H1 (cell line): ENCODE measurements at regions of chr22 and their contacts with region 1.

Region 1: DNA sequence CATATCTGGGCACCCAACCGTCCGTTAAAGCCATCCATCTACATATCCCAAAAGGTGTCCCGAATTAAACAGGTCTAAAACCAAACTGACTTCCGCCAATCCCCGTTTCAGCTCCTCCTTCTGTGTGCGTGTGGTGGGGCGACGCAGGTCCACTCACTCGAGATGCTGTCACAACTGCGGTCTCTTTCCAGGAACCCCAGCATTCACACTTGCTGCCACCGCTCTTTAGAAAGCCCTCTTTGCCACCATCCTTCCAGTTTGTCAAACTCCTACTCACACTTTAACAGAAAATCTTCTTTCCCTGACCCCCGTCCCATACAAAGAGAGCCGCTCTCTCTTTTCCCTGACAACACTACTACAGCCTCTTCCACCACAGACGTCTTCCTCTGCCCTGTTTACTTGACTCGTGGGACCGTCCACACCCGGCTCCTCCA is 467 bp downstream of the ESS2 start:
- DNase-seq: no peak
- H3K4me3 ChIP-seq: peak overlapping the region; percentile 47 to 94 (median 92)
- H3K27ac ChIP-seq: 0 out of 2 replicates have a peak overlapping the region, but pooled peaks have one; percentile 59
- H3K4me1 ChIP-seq: peaks cover 0 to 12% (median 5%) of the 10 kb centered on the region in 4 experiments; a peak in 5 of 7 replicates
- H3K27me3 ChIP-seq: peaks cover 16 to 29% (median 22%) of the 10 kb centered on the region in 4 experiments
- CTCF ChIP-seq: no peak
- EP300 ChIP-seq: no peak
- POLR2A ChIP-seq: no peak
- RAD21 ChIP-seq: no peak

Region 2: GRCh38 chr22:19130959-19131684 is 12.9 kb before region 1 on chr22 and contains the start of gene TSSK2:
- CTCF ChIA-PET with region 1: interaction called, 7 read pairs
- POLR2A ChIA-PET with region 1: interaction called, 24 read pairs
- DNase-seq: no peak
- H3K4me3 ChIP-seq: no peak within 1 kb of the TSS
- H3K27ac ChIP-seq: no peak within 1 kb of the TSS
- H3K4me1 ChIP-seq: no peaks in the 10 kb centered on the region
- H3K27me3 ChIP-seq: 0 out of 7 replicates have a peak, but pooled peaks cover 0 to 2% (median under 1%) of the 10 kb centered on the region in 4 experiments
- CTCF ChIP-seq: no peak
- EP300 ChIP-seq: no peak
- POLR2A ChIP-seq: no peak
- RAD21 ChIP-seq: no peak
- total RNA-seq, gene TSSK2: not detected in 2 replicates

Region 3: DNA sequence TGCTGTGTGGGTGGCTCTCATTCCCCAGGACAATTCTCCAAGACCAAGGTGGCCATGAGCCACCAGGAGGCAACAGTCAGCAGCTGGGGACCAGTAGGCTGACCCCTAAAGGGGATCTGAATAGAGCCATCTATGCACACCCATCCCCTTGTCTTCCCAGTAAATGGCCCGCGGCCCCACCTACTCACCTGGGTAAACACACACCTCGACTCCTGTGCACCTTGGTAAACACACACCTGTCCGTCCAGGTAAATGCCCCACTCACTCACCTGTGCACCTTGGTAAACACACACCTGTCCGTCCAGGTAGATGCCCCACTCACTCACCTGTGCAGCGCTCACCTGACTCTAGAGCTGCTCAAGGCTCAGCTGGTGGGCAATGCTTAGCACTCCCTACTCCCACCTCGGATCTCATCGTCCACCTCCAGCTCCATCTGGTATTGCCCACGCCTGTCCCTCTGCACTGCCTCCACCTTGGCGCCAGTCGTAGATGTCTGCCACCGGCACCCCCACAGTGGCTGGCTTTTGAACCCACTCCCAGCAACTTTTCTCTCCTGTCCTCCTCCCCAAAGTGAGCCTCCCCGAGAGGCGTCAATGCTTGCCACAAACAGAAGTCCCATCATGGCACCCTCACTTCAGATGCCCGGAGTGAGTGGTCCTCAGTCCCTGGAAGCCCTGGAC is 24.4 kb after region 1 on chr22:
- CTCF ChIA-PET with region 1: interaction called, 28 read pairs
- POLR2A ChIA-PET with region 1: no interaction called
- DNase-seq: no peak
- H3K4me3 ChIP-seq: no peak overlapping the region
- H3K27ac ChIP-seq: no peak overlapping the region
- H3K4me1 ChIP-seq: peaks cover 0 to 20% (median 13%) of the 10 kb centered on the region in 4 experiments; a peak in 6 of 7 replicates
- H3K27me3 ChIP-seq: peaks cover 20 to 46% (median 38%) of the 10 kb centered on the region in 4 experiments
- CTCF ChIP-seq: peak; percentile 32 to 63 (median 40)
- EP300 ChIP-seq: no peak
- POLR2A ChIP-seq: no peak
- RAD21 ChIP-seq: peak; percentile 24 to 43; a peak in 3 of 4 replicates

Region 4: GRCh38 chr22:19304547-19304946 is 160.6 kb after region 1 on chr22:
- CTCF ChIA-PET with region 1: no interaction called
- POLR2A ChIA-PET with region 1: no interaction called
- DNase-seq: no peak
- H3K4me3 ChIP-seq: no peak overlapping the region
- H3K27ac ChIP-seq: no peak overlapping the region
- H3K4me1 ChIP-seq: no peaks in the 10 kb centered on the region
- H3K27me3 ChIP-seq: no peaks in the 10 kb centered on the region
- CTCF ChIP-seq: no peak
- EP300 ChIP-seq: no peak
- POLR2A ChIP-seq: no peak
- RAD21 ChIP-seq: no peak